ENCODE measurements at regions of chr14 and their contacts with region 1.

Region 1: GRCh38 chr14:95442633-95443021 is 73.8 kb downstream of the SYNE3 start:
- DNase-seq: peak; percentile 89
- ATAC-seq: peak; percentile 93 to 97

Region 2: DNA sequence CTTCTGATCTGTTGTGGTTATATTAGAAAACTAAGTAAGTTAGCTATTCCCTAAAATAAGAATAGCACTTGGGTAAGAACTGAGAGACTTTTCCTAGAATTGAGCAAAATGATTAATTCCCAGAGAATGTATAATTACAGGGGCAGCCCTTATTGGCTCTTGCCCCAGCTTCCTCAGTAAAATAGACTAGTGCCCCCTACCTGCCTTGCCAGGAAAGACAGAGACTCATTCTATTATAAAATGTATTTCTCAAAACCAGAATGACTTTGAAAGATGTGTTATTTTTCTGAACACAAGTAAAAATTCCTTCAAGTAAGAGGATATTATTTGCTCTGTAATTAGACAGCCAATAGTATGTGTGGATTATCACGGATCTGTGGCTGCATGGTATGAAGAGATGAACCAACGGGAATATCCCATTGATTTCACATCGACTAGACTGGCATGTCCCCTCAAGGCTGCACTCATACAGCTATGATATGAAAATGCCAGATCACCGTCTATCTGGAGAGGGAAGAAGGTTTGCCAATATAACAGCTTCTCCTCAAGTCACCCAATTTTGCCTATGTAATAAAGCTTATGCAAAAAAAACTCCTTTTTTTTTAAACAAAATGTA is 84.9 kb after region 1 on chr14:
- intact Hi-C with region 1: loop called (anchors 1 to 5 kb)
- DNase-seq: peak; percentile 71
- ATAC-seq: peak; percentile 67 to 72